GM13976 (cell line): ENCODE measurements at regions of chr19 and their contacts with region 1.

Region 1: GRCh38 chr19:2950286-2951124 is 5.7 kb upstream of the ZNF77 start:
- DNase-seq: peak; percentile 99
- CTCF ChIP-seq: no peak

Region 2: GRCh38 chr19:2887391-2887914 is 63.1 kb before region 1 on chr19:
- in situ Hi-C with region 1: no loop called
- DNase-seq: peak; percentile 78
- CTCF ChIP-seq: peak; percentile 30

Region 3: GRCh38 chr19:3108775-3109174 is 158.3 kb after region 1 on chr19:
- in situ Hi-C with region 1: loop called (anchors 10 kb)
- DNase-seq: peak; percentile 82
- CTCF ChIP-seq: peak; percentile 88